Activated T-helper 1 cell treated with anti-CD3 and anti-CD28 coated beads, Interleukin-12 subunit alpha, Interleukin-12 subunit beta, Interleukin-2, Interleukin-4 antibody, amounts not matched to agents 30 ng/mL and 10 ng/mL and 1 ng/mL, durations not matched to agents 14 hours and 24 hours and 36 hours (primary cell): ENCODE measurements at regions of chr19 and their contacts with region 1.

Region 1: DNA sequence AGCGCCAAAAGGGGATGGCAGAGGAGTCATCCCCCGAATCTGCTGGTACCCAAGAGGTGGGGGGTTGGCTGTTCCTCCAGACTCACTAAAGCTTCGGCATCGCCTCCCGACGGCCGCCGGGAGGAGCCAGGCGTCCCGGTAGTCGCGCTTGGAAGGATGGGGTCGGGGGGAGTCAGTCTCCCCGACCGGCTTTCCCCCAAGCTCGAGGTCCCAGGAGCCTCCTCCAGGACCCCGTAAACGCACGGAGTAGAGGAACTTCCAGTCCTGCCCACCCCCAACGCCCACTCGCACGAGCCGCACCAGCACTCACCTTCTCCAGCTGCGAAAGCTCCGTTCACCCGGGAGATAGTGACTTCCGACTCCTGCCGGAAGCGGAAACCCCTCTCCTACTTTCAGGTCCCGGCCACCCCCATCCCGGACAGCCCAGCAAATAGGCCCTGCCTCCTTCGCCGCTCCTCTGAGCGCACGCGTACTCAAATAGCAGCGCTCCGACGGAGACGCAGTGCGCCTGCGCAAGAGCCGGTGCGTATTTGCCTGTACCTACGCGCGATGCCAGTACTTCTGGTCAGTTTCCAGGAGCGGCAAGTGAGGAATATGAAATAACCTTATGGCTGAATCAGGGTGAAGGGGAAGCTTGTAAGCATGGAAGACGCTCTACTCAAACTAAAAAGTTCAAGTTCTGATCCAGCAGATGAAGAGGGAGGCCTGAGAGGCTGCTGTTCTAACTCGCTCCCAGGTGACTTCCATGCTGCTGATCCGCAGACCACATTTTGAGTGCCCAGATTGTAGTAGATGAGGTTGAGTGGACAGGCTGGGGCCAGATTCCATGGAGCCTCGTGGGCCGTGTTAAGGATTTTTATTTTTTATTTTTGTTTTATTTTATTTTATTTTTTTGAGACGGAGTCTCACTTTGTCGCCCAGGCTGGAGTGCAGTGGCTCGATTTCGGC is at the start of gene ELOF1:
- DNase-seq: peak; percentile 97
- H3K4me3 Mint-ChIP-seq: peak within 1 kb of the TSS; percentile 92
- H3K27ac Mint-ChIP-seq: peak within 1 kb of the TSS; percentile 96
- H3K4me1 Mint-ChIP-seq: peaks cover 42% of the 10 kb centered on the region
- H3K27me3 Mint-ChIP-seq: no peaks in the 10 kb centered on the region
- total RNA-seq, gene ELOF1: 76.7 and 77.6 TPM in 2 replicates

Region 2: DNA sequence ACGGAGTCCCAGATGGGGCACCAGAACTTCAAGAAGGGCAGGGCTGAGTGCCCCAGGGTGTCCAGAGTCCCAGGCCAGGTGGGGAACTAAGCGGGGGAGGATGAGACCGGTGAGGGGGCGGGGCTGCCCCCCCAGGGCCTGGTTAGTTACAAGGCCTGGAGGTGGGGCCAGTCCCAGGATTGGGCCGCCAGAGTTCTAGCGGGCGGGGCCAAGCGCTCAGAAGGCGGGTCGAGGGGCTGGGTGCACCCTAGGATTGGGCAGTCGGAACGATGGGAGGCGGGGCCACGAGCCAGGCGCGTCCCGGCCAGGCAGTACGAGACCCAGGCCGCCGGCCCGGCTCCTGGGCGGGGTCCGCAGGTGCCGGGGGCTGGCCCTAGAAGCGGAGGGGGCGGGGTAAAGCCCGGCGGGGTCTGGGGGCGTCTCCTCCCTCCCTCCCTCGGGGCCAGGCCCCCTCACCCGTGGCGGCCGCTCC is 54.1 kb before region 1 on chr19:
- intact Hi-C with region 1: loop called (anchors 1 kb)
- DNase-seq: peak; percentile 97
- H3K4me3 Mint-ChIP-seq: peak overlapping the region; percentile 91
- H3K27ac Mint-ChIP-seq: peak overlapping the region; percentile 84
- H3K4me1 Mint-ChIP-seq: peaks cover 13% of the 10 kb centered on the region
- H3K27me3 Mint-ChIP-seq: no peaks in the 10 kb centered on the region

Region 3: GRCh38 chr19:11535792-11536595 is 23.2 kb before region 1 on chr19:
- intact Hi-C with region 1: loop called (anchors 1 kb)
- DNase-seq: peak; percentile 83
- H3K4me3 Mint-ChIP-seq: peak overlapping the region; percentile 59
- H3K27ac Mint-ChIP-seq: peak overlapping the region; percentile 71
- H3K4me1 Mint-ChIP-seq: peaks cover 15% of the 10 kb centered on the region
- H3K27me3 Mint-ChIP-seq: peaks cover 12% of the 10 kb centered on the region

Region 4: DNA sequence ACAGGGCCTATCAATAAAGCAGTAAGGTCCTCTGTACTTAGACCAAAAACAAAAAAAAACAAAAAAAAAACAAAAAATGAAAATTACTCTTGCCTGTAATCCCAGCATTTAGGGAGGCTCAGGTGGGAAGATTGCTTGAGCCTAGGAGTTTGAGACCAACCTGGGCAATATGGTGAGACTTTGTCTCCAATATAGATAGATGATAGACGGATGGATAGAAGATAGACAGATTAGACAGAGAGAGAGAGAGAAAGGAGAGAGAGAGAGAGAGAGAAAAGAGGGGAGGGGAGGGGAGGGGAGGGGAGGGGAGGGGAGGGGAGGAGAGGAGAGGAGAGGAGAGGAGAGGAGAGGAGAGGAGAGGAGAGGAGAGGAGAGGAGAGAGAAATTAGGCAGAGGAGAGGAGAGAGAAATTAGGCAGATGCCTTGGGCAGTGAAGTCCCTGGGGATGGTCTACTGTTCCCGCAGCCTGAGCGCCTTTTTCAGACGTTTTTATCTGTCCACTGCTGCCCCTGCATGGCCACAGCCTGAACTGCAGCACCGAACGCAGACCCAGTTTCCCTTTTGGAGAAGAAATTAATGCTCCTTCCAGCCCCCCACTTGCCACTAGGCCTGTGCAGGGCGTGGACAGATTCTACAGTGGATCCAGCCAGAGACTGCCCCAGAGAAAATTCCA is 28.3 kb after region 1 on chr19:
- intact Hi-C with region 1: loop called (anchors 1 kb)
- DNase-seq: peak; percentile 70
- H3K4me3 Mint-ChIP-seq: no peak overlapping the region
- H3K27ac Mint-ChIP-seq: peak overlapping the region; percentile 9
- H3K4me1 Mint-ChIP-seq: peaks cover 12% of the 10 kb centered on the region
- H3K27me3 Mint-ChIP-seq: peaks cover 2% of the 10 kb centered on the region

Region 5: DNA sequence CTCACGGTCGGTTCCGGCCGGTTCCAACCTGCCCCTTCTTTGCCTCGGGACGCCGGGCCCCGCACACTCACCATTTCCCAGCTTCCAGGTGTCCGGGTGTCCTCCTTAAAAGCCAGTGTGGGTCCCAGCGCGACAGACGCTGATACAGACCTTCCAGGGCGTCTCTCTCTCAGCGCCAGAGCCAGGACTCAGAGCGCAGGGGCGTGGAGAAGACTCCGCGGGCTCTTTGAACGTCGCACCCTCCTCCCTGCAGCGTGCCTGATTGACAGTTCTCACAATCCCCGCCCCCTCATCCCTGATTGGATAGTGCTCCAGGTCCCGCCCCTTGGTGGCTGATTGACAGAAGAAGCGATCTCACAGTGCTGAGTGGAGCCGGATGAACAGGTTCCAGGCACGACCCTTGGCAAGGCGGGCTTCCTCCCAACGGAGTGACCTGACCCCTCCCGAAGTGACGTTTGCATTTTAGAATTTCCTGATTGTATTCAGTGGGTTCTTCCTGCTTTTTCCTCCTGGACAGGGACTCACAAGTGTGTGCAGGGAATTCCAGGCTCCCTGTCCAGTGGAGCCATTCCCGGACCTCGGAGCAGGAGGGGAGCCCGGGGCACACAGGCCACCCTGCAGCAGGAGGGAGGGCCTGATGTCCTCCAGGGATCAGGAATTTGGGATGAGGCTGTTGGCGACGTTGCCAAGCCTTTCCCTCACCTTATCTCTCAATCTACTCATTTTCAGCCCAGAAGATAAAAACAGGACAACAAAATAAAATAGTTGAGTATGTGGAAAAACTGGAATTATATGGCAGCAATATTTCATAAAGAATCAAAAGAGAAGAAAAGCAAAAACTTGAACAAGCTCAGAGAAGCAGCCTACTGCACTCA is 179.8 kb after region 1 on chr19 and contains the start of gene ZNF823:
- intact Hi-C with region 1: loop called (anchors 1 kb)
- DNase-seq: peak; percentile 91
- H3K4me3 Mint-ChIP-seq: peak within 1 kb of the TSS; percentile 98
- H3K27ac Mint-ChIP-seq: peak within 1 kb of the TSS; percentile 92
- H3K4me1 Mint-ChIP-seq: peaks cover 19% of the 10 kb centered on the region
- H3K27me3 Mint-ChIP-seq: peaks cover 3% of the 10 kb centered on the region
- total RNA-seq, gene ZNF823: 2.5 and 2.8 TPM in 2 replicates